ENCODE measurements at regions of chr6 and their contacts with region 1.

Region 1: DNA sequence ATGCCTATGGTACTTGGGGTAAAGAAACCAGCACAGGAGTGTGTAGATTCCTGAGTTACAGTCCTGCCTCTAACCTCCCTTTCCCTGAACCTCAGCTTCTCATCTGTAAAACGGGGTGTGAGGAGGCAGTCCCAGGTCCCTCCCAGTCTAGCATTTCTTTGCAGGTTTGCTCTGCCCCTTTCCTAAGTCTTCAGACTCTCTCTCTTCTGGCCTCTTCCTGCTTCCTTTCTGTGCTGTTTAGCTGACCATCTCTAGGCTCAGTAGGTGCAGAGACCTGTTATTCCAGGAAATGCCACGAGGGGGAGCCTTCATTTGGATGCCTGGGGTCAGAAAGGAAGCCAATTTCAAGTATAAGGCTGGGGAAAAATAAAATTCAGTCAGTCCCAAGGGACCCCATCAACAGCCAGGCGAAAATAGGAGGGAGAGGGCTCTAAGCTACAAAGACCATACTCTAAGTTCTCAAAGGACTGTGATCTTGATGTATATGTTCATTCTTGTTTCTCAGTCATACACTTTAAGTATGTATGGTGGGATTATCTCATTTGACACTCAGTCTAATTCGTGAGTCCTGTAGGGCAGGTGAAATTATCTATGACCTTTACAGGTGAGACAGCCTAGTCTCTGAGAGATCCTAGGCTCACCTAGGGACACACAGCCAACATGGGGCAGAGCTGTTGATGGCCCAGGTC is 89.1 kb downstream of the NCR2 start:
- DNase-seq: peak; percentile 55
- H3K4me3 ChIP-seq: no peak overlapping the region
- H3K27ac ChIP-seq: no peak overlapping the region
- H3K4me1 ChIP-seq: peaks cover 15% of the 10 kb centered on the region
- H3K27me3 ChIP-seq: peaks cover 3% of the 10 kb centered on the region
- CTCF ChIP-seq: peak; percentile 87 to 90

Region 2: DNA sequence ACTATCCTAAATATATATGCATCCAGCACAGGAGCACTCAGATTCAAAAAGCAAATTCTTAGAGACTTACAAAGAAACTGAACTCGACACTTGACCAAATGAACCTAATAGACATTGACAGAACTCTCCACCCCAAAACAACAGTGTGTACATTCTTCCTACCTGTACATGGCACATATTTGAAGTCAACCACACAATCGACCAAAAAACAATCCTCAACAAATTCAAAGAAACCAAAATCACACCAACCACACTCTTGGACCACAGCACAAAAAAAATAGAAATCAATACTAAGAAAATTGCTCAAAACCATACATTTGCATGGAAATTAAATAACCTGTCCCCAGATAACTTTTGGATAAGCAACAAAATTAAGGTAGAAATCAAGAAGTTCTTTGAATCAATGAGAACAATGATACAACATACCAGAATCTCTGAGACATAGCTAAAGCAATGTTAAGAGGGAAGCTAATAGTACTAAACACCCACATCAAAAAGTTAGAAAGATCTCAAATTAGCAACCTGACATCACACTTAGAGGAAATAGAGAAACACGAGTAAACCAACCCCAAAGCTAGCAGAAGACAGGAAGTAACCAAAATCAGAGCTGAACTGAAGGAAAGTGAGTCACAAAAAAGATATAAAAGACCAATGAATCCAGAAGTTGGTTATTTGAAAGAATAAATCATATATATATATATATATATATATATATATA is 125.6 kb before region 1 on chr6:
- CTCF ChIA-PET with region 1: no interaction called
- dilution Hi-C with region 1: no loop called
- in situ Hi-C with region 1: no loop called
- intact Hi-C with region 1: no loop called
- DNase-seq: no peak
- H3K4me3 ChIP-seq: no peak overlapping the region
- H3K27ac ChIP-seq: no peak overlapping the region
- H3K4me1 ChIP-seq: no peaks in the 10 kb centered on the region
- H3K27me3 ChIP-seq: peaks cover 3% of the 10 kb centered on the region
- CTCF ChIP-seq: no peak

Region 3: GRCh38 chr6:41449399-41450245 is 25.1 kb after region 1 on chr6:
- CTCF ChIA-PET with region 1: interaction called, 10 read pairs
- dilution Hi-C with region 1: no loop called
- in situ Hi-C with region 1: no loop called
- intact Hi-C with region 1: no loop called
- DNase-seq: no peak
- H3K4me3 ChIP-seq: no peak overlapping the region
- H3K27ac ChIP-seq: no peak overlapping the region
- H3K4me1 ChIP-seq: no peaks in the 10 kb centered on the region
- H3K27me3 ChIP-seq: no peaks in the 10 kb centered on the region
- CTCF ChIP-seq: no peak

Region 4: DNA sequence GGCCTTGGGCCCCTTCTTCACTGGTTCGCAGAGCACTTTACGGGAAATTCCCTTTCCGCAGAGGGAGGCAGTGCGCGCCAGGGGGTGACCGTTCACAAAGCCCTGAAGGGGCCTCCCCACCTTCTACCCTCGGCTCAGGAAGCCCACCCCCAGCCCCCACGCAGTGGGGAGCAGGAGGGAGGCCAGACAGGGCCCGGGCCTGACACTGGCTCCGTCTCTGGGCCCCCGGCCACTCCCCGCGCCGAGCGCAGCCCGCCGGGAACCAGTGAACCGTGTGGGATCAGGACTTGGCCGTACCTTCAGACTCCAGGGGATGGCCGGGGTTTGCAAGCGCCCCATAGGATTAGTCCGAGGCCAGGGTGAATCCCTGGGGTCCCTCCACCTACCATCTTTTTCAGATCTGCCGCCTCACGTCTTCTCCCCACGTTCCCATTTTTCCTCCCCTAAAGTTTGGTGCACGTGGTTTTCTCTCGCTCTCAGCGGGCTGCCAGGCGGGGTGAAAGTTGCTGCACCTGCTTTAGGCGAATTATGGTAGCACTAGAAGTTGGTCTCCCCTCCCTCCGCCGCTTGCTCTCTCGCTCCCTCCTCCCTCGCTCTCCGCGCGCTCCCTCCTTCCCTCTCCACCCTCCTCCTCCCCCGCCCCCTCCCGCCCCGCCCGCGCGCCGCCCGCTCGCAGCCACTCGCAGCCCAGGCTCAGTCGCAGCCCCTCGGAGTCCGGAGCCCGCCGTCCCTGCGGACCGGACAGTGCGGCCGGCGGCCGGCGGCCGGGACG is 121.4 kb after region 1 on chr6 and contains the start of gene FOXP4:
- CTCF ChIA-PET with region 1: no interaction called
- dilution Hi-C with region 1: no loop called
- in situ Hi-C with region 1: no loop called
- intact Hi-C with region 1: loop called (anchors 2 kb)
- DNase-seq: peak; percentile 91
- H3K4me3 ChIP-seq: peak within 1 kb of the TSS; percentile 75 to 88 (median 80)
- H3K27ac ChIP-seq: no peak within 1 kb of the TSS
- H3K4me1 ChIP-seq: peaks cover 29% of the 10 kb centered on the region
- H3K27me3 ChIP-seq: no peaks in the 10 kb centered on the region
- CTCF ChIP-seq: no peak
- total RNA-seq, gene FOXP4: 5.0 to 19.2 TPM

Region 5: GRCh38 chr6:41591859-41592502 is 167.5 kb after region 1 on chr6:
- CTCF ChIA-PET with region 1: no interaction called
- dilution Hi-C with region 1: no loop called
- in situ Hi-C with region 1: loop called in 1 of 2 experiments (anchors 5 kb)
- intact Hi-C with region 1: loop called (anchors 1 kb)
- DNase-seq: peak; percentile 41
- H3K4me3 ChIP-seq: no peak overlapping the region
- H3K27ac ChIP-seq: no peak overlapping the region
- H3K4me1 ChIP-seq: no peaks in the 10 kb centered on the region
- H3K27me3 ChIP-seq: no peaks in the 10 kb centered on the region
- CTCF ChIP-seq: peak; percentile 88 to 92

Region 6: DNA sequence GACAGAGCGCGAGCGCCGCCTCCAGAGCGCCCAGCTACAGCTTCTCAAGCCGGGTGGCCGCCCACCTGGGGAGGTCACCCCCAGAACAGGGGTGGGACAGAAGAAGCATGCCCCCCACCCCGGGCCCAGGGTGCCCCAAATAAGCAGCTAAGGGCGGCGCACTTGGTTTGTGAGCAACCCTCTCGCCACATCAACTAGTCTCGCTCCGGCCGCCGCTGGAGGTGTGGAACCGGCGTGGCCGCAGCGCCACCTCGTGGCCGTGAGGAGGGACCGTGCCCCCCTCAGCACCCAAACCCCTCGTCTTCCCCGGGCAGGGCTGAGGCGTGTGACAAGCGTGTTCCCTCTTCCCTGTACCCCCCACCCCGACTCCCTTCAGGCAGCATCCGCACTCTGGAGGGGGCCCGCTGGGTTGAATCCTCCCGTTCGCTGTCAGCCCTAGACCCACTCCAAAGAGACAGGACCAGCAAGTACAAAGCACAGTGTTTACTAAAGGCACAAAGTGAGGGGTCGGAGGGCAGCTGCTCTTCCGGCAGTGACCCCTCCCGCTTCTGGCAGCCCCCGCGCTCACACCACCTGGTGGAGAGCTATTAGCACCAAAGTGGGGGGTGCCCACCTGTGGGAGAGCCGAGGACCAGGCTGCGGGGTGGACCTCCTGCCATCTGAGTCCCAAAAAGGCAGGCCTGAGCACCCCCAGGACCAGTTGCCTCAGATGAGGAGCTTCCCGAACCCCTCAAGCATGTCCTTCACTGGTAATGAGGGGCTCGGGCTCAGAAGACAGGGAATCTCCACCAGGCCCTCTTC is 259.2 kb after region 1 on chr6:
- CTCF ChIA-PET with region 1: no interaction called
- dilution Hi-C with region 1: no loop called
- in situ Hi-C with region 1: no loop called
- intact Hi-C with region 1: loop called (anchors 1 kb)
- DNase-seq: peak; percentile 39
- H3K4me3 ChIP-seq: no peak overlapping the region
- H3K27ac ChIP-seq: no peak overlapping the region
- H3K4me1 ChIP-seq: peaks cover 3% of the 10 kb centered on the region
- H3K27me3 ChIP-seq: no peaks in the 10 kb centered on the region
- CTCF ChIP-seq: peak; percentile 75 to 85